CD4-positive, alpha-beta memory T cell (primary cell): ENCODE measurements at regions of chr19 and their contacts with region 1.

Region 1: DNA sequence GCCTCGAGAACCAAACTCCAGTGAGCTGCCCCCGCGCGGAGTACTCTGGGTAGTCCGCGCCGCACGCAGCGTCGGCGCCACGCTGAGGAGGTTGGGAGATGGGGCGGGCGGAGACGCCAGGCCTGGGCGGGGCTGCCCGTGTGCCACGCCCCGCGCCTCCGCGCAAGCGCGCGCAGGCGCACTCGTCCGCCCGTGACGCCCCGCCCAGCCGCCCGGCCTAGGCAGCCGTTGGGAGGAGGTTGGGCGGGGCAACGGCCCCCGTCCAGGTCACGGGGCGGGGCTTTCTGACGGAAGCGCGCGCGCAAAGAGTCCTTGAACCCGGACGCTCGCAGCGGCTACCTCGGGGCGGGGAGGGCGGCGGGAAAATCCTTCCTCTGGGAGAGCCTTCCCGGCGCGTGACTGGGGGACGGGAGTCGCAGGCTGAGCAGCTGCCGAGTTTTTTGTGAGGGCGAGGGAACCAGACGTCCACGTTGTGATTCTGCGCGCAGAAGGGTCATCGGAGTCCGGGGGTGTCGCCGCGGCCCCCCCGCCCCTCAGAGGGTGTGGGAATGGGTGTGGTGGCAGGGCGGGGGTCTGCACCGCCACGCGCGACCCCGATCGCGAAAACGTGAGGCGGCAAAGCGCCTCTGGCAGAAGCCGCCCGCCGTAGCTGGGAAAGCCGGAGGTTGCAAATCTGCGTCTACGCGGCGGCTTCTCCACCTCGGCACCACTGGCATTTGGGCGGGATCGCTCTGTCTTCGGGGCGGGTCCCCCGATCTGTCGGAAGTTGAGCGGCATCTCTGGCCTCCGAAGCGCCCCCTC is at the start of gene MED26:
- DNase-seq: peak; percentile 92 to 94 (median 92)
- H3K4me3 ChIP-seq: peak within 1 kb of the TSS; percentile 71 to 90
- H3K4me3 Mint-ChIP-seq: peak within 1 kb of the TSS; percentile 95 to 99 (median 98)
- H3K27ac ChIP-seq: peak within 1 kb of the TSS; percentile 91
- H3K27ac Mint-ChIP-seq: peak within 1 kb of the TSS; percentile 93 to 99 (median 98)
- H3K4me1 ChIP-seq: peaks cover 42% of the 10 kb centered on the region
- H3K4me1 Mint-ChIP-seq: peaks cover 26 to 51% (median 41%) of the 10 kb centered on the region in 4 donors
- H3K27me3 ChIP-seq: no peaks in the 10 kb centered on the region
- H3K27me3 Mint-ChIP-seq: no peaks in the 10 kb centered on the region
- total RNA-seq, gene MED26: 17.8 to 18.6 TPM

Region 2: GRCh38 chr19:16470911-16471811 is 157.2 kb before region 1 on chr19:
- CTCF ChIA-PET with region 1: no interaction called
- POLR2A ChIA-PET with region 1: no interaction called
- intact Hi-C with region 1: loop called (anchors 1 kb)
- DNase-seq: peak in 3 of 5 donors; percentile 13 to 15 (median 13)
- H3K4me3 ChIP-seq: peak overlapping the region; percentile 42 to 61
- H3K4me3 Mint-ChIP-seq: peak overlapping the region; percentile 87 to 92 (median 90)
- H3K27ac ChIP-seq: peak overlapping the region; percentile 79
- H3K27ac Mint-ChIP-seq: peak overlapping the region; percentile 26 to 91 (median 84)
- H3K4me1 ChIP-seq: peaks cover 33% of the 10 kb centered on the region
- H3K4me1 Mint-ChIP-seq: peaks cover 28 to 49% (median 36%) of the 10 kb centered on the region in 4 donors
- H3K27me3 ChIP-seq: no peaks in the 10 kb centered on the region
- H3K27me3 Mint-ChIP-seq: peaks cover 0 to 2% of the 10 kb centered on the region in 2 donors

Region 3: GRCh38 chr19:16542045-16542909 is 86.1 kb before region 1 on chr19 and contains the start of gene CHERP:
- CTCF ChIA-PET with region 1: no interaction called
- POLR2A ChIA-PET with region 1: interaction called, 19 read pairs
- intact Hi-C with region 1: loop called (anchors 1 kb)
- DNase-seq: peak; percentile 93 to 95 (median 94)
- H3K4me3 ChIP-seq: peak within 1 kb of the TSS; percentile 91 to 96
- H3K4me3 Mint-ChIP-seq: peak within 1 kb of the TSS; percentile 89 to 97 (median 92)
- H3K27ac ChIP-seq: peak within 1 kb of the TSS; percentile 77
- H3K27ac Mint-ChIP-seq: peak within 1 kb of the TSS; percentile 90 to 96 (median 94)
- H3K4me1 ChIP-seq: peaks cover 63% of the 10 kb centered on the region
- H3K4me1 Mint-ChIP-seq: peaks cover 34 to 68% (median 51%) of the 10 kb centered on the region in 4 donors
- H3K27me3 ChIP-seq: no peaks in the 10 kb centered on the region
- H3K27me3 Mint-ChIP-seq: no peaks in the 10 kb centered on the region
- total RNA-seq, gene CHERP: 72.9 to 73.5 TPM

Region 4: GRCh38 chr19:16556525-16556924 is 71.9 kb before region 1 on chr19:
- CTCF ChIA-PET with region 1: no interaction called
- POLR2A ChIA-PET with region 1: no interaction called
- intact Hi-C with region 1: no loop called
- DNase-seq: no peak
- H3K4me3 ChIP-seq: no peak overlapping the region
- H3K4me3 Mint-ChIP-seq: no peak overlapping the region
- H3K27ac ChIP-seq: no peak overlapping the region
- H3K27ac Mint-ChIP-seq: peak overlapping the region in 2 of 7 donors; percentile 41 to 68
- H3K4me1 ChIP-seq: no peaks in the 10 kb centered on the region
- H3K4me1 Mint-ChIP-seq: peaks cover 0 to 11% (median 4%) of the 10 kb centered on the region in 4 donors
- H3K27me3 ChIP-seq: no peaks in the 10 kb centered on the region
- H3K27me3 Mint-ChIP-seq: no peaks in the 10 kb centered on the region

Region 5: GRCh38 chr19:16572332-16573211 is 55.8 kb before region 1 on chr19 and contains the start of gene SLC35E1:
- CTCF ChIA-PET with region 1: no interaction called
- POLR2A ChIA-PET with region 1: interaction called, 34 read pairs
- intact Hi-C with region 1: loop called (anchors 1 kb)
- DNase-seq: peak; percentile 89 to 91 (median 91)
- H3K4me3 ChIP-seq: peak within 1 kb of the TSS; percentile 95 to 98
- H3K4me3 Mint-ChIP-seq: peak within 1 kb of the TSS; percentile 96 to 100 (median 99)
- H3K27ac ChIP-seq: peak within 1 kb of the TSS; percentile 91
- H3K27ac Mint-ChIP-seq: peak within 1 kb of the TSS; percentile 98 to 100 (median 99)
- H3K4me1 ChIP-seq: peaks cover 54% of the 10 kb centered on the region
- H3K4me1 Mint-ChIP-seq: peaks cover 33 to 76% (median 57%) of the 10 kb centered on the region in 4 donors
- H3K27me3 ChIP-seq: no peaks in the 10 kb centered on the region
- H3K27me3 Mint-ChIP-seq: no peaks in the 10 kb centered on the region
- total RNA-seq, gene SLC35E1: 38.8 TPM

Region 6: DNA sequence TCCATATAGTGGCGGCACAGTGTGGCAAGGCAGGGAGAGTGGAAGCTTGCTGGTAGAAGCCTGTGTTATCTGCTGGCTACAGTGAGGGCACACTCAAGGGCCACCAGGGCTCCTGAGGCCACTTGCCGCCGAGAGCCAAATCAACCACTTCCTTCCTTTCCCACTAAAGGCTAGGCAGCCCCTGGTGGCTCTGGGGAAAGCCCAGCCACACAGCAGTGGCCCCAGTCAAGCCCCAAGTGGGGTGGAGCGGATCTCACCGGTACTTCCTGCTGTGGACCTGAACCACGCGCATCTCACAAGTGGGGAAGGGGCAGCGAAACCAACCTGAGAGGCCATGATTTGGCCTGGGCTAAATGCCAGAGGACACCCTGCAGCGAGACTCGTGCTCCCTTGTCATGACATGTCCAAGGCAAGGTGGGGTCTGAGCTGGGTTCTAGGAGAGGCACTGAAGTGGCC is 34.2 kb before region 1 on chr19:
- CTCF ChIA-PET with region 1: no interaction called
- POLR2A ChIA-PET with region 1: interaction called, 69 read pairs
- intact Hi-C with region 1: loop called (anchors 2 kb)
- DNase-seq: peak; percentile 47 to 77 (median 56)
- H3K4me3 ChIP-seq: peak overlapping the region; percentile 30 to 34
- H3K4me3 Mint-ChIP-seq: peak overlapping the region; percentile 74 to 85 (median 80)
- H3K27ac ChIP-seq: peak overlapping the region; percentile 61
- H3K27ac Mint-ChIP-seq: peak overlapping the region; percentile 88 to 98 (median 96)
- H3K4me1 ChIP-seq: peaks cover 78% of the 10 kb centered on the region
- H3K4me1 Mint-ChIP-seq: peaks cover 55 to 87% (median 75%) of the 10 kb centered on the region in 4 donors
- H3K27me3 ChIP-seq: no peaks in the 10 kb centered on the region
- H3K27me3 Mint-ChIP-seq: no peaks in the 10 kb centered on the region